AG04449 (cell line): ENCODE measurements at regions of chr4 and their contacts with region 1.

Region 1: DNA sequence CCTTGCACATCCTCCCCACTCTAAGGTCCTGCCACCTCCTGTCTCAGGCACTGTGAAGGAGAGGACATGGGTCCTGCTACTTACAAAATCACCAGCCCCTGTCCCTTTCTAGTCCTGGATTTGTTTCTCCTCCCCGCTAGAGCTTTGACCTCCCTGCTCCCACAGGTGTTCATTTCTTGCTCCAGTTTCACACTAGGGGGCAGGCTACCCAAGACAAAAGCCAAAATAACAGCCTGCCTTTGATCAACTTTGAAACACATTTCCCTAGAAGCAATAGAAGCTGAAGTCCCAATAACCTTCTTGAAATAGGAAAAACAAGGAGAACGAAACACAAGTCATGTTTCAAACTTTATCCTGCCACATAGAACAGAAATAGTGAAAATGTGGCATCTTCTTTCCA is 164.4 kb downstream of the QDPR start:
- DNase-seq: no peak
- H3K4me3 ChIP-seq: no peak overlapping the region
- CTCF ChIP-seq: peak; percentile 58

Region 2: DNA sequence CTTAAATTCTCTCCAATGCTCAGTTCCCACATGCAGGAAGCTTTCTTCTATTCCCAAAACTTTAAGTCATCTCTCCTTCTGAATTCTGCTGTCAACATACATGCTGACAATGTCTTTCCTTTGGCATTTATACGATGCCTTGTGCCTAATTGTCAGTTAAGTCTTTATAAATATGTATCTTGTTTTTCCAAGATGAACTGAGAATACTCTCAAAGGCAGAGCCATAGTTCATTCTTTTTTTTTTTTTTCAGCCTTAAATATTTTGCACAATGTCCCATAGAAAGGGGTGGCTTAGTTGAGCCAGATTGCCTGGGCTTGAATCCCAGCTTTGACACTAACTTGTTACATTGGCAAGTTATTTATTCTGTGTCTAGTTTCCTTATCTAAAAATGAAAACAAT is 46.2 kb before region 1 on chr4:
- CTCF ChIA-PET with region 1: no interaction called
- POLR2A ChIA-PET with region 1: no interaction called
- DNase-seq: no peak
- H3K4me3 ChIP-seq: no peak overlapping the region
- CTCF ChIP-seq: no peak

Region 3: DNA sequence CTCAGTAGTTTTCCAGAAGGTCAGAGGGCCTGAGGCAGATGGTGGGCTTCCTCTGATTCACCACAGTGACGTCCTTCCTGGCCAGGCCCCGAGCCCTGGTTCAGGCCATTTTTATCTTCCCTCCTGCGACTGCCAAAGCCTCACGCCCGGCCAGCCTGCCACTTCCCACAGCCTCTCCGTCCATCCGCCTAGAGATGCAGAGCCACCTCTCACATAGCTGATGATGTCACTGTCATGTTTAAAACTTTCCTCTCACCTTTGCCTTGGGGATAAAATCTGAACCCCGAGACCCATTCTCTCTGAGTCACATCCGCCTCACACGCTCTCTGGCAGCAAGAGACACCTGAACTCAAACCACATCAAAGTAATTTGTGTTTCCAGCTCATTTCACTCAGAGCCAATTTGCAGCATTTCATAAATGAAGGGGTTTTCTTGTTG is 10.9 kb before region 1 on chr4:
- CTCF ChIA-PET with region 1: interaction called, 16 read pairs
- POLR2A ChIA-PET with region 1: no interaction called
- DNase-seq: no peak
- H3K4me3 ChIP-seq: no peak overlapping the region
- CTCF ChIP-seq: no peak

Region 4: GRCh38 chr4:17366496-17366895 is 19.1 kb after region 1 on chr4:
- CTCF ChIA-PET with region 1: interaction called, 10 read pairs
- POLR2A ChIA-PET with region 1: no interaction called
- DNase-seq: no peak
- H3K4me3 ChIP-seq: no peak overlapping the region
- CTCF ChIP-seq: no peak

Region 5: DNA sequence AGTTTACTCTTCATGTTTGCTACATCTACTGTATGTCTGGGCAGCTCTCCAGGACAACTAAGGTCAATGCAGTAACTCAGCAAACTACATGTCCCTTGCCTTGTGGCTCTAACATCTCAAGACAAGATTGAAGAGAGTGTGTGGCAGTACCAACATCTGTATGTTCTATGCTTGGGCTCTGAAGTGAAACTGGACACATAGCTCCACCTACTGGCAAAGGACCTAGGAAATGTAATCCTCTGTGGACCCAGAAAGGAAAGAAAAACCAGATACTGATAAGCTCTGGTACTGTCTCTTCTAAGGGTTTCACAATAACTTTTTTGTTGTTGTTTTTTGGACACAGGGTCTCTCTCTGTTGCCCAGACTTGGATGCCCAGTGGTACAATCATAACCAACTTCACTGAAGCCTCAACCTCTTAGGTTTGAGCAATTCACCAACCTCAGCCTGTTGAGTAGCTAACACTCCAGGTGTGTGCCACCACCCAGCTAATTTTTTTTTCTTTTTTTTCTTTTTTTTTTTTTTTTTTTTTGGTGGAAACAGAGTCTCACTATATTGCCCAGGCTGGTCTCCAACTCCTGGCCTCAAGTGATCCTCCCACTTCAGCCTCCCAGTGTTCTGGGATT is 100.3 kb after region 1 on chr4:
- CTCF ChIA-PET with region 1: interaction called, 121 read pairs
- POLR2A ChIA-PET with region 1: interaction called, 3 read pairs
- DNase-seq: no peak
- H3K4me3 ChIP-seq: no peak overlapping the region
- CTCF ChIP-seq: peak; percentile 66